Aorta (tissue), 5 donors: ENCODE measurements at regions of chr2 and their contacts with region 1.

Region 1: GRCh38 chr2:96174251-96175144 is 29.3 kb upstream of the DUSP2 start:
- DNase-seq: peak; percentile 81 to 90
- ATAC-seq: peak; percentile 87
- H3K4me3 ChIP-seq: no peak overlapping the region
- H3K27ac ChIP-seq: no peak overlapping the region
- H3K4me1 ChIP-seq: no peaks in the 10 kb centered on the region
- H3K27me3 ChIP-seq: no peaks in the 10 kb centered on the region

Region 2: GRCh38 chr2:96024336-96025193 is 149.9 kb before region 1 on chr2:
- intact Hi-C with region 1: loop called in 1 of 2 experiments (anchors 10 kb)
- DNase-seq: no peak
- ATAC-seq: no peak
- H3K4me3 ChIP-seq: no peak overlapping the region
- H3K27ac ChIP-seq: no peak overlapping the region
- H3K4me1 ChIP-seq: no peaks in the 10 kb centered on the region
- H3K27me3 ChIP-seq: no peaks in the 10 kb centered on the region

Region 3: GRCh38 chr2:96065381-96065930 is 109.0 kb before region 1 on chr2:
- intact Hi-C with region 1: loop called in 1 of 2 experiments (anchors 10 kb)
- DNase-seq: peak in 1 of 2 donors; percentile 24
- ATAC-seq: no peak
- H3K4me3 ChIP-seq: no peak overlapping the region
- H3K27ac ChIP-seq: no peak overlapping the region
- H3K4me1 ChIP-seq: no peaks in the 10 kb centered on the region
- H3K27me3 ChIP-seq: no peaks in the 10 kb centered on the region

Region 4: DNA sequence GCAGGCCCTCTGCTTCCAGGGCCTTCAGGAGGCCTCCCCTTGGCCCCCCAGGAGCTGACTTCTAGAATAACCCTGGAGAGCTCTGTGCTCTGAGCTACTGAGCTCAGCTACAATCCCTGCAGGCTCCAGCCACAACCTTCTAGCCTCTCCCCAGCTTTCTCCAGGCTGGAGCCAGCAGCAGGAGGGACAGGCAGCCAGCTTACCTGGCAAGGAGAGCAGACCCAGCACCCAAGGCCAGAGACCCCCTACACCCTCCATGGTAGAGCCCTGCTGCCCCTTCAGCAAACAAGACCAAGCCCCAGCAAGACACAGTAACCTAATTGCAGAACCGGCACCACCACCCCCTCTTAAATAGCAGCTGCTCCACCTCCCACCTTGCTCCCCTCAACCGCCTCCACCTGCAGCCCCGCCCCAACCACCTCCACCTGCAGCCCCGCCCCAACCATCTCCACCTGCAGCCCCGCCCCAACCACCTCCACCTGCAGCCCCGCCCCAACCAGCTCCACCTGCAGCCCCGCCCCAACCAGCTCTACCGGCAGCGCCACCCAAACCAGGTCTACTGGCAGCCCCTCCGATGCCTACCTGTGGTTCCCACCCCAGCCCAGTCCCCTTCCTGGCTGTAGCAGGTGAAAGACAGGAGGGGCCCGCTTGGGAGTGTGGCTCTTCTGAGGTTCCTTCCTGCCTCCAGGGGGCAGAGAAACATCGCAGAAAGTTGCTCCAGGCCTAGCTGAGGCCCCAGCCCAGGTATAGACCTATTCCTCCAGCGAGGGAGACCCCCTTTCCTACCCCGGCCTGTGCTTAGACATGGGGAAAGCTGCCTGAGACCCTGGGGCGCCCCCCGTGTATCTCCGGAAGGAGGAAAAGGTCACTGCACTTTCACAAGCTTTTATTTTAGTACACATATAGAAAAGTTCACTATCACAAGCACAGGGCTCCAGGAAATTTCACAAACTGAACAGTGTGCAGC is 36.0 kb before region 1 on chr2 and contains the start of gene ASTL:
- intact Hi-C with region 1: loop called (anchors 2 to 5 kb)
- DNase-seq: peak in 1 of 2 donors; percentile 52
- ATAC-seq: no peak
- H3K4me3 ChIP-seq: no peak within 1 kb of the TSS
- H3K27ac ChIP-seq: no peak within 1 kb of the TSS
- H3K4me1 ChIP-seq: no peaks in the 10 kb centered on the region
- H3K27me3 ChIP-seq: no peaks in the 10 kb centered on the region
- total RNA-seq, gene ASTL: 0.57 to 0.62 TPM

Region 5: GRCh38 chr2:96195410-96196066 is 21.0 kb after region 1 on chr2:
- intact Hi-C with region 1: loop called in 1 of 2 experiments (anchors 2 kb)
- DNase-seq: no peak
- ATAC-seq: no peak
- H3K4me3 ChIP-seq: no peak overlapping the region
- H3K27ac ChIP-seq: no peak overlapping the region
- H3K4me1 ChIP-seq: no peaks in the 10 kb centered on the region
- H3K27me3 ChIP-seq: no peaks in the 10 kb centered on the region